Activated naive CD4-positive, alpha-beta T cell treated with anti-CD3 and anti-CD28 coated beads for 36 hours (primary cell): ENCODE measurements at regions of chr1 and their contacts with region 1.

Region 1: GRCh38 chr1:52927212-52928014 is at the start of gene SCP2:
- DNase-seq: peak; percentile 83
- H3K4me3 Mint-ChIP-seq: peak within 1 kb of the TSS; percentile 85
- H3K27ac Mint-ChIP-seq: no peak within 1 kb of the TSS
- H3K4me1 Mint-ChIP-seq: peaks cover 13% of the 10 kb centered on the region
- H3K27me3 Mint-ChIP-seq: no peaks in the 10 kb centered on the region
- total RNA-seq, gene SCP2: 71.8 to 79.2 TPM

Region 2: GRCh38 chr1:52424231-52424636 is 503.2 kb before region 1 on chr1:
- CTCF ChIA-PET with region 1: no interaction called
- intact Hi-C with region 1: loop called (anchors 10 kb)
- DNase-seq: peak; percentile 34
- H3K4me3 Mint-ChIP-seq: peak overlapping the region; percentile 57
- H3K27ac Mint-ChIP-seq: peak overlapping the region; percentile 83
- H3K4me1 Mint-ChIP-seq: peaks cover 51% of the 10 kb centered on the region
- H3K27me3 Mint-ChIP-seq: no peaks in the 10 kb centered on the region

Region 3: GRCh38 chr1:53014791-53015507 is 87.5 kb after region 1 on chr1:
- CTCF ChIA-PET with region 1: no interaction called
- intact Hi-C with region 1: loop called (anchors 1 kb)
- DNase-seq: peak; percentile 91
- H3K4me3 Mint-ChIP-seq: peak overlapping the region; percentile 78
- H3K27ac Mint-ChIP-seq: peak overlapping the region; percentile 60
- H3K4me1 Mint-ChIP-seq: peaks cover 20% of the 10 kb centered on the region
- H3K27me3 Mint-ChIP-seq: no peaks in the 10 kb centered on the region